Activated CD4-positive, alpha-beta T cell treated with anti-CD3 and anti-CD28 coated beads, Interleukin-2, amount 10 ng/mL, durations not matched to agents 24 days and 14 days (primary cell): ENCODE measurements at regions of chr4 and their contacts with region 1.

Region 1: DNA sequence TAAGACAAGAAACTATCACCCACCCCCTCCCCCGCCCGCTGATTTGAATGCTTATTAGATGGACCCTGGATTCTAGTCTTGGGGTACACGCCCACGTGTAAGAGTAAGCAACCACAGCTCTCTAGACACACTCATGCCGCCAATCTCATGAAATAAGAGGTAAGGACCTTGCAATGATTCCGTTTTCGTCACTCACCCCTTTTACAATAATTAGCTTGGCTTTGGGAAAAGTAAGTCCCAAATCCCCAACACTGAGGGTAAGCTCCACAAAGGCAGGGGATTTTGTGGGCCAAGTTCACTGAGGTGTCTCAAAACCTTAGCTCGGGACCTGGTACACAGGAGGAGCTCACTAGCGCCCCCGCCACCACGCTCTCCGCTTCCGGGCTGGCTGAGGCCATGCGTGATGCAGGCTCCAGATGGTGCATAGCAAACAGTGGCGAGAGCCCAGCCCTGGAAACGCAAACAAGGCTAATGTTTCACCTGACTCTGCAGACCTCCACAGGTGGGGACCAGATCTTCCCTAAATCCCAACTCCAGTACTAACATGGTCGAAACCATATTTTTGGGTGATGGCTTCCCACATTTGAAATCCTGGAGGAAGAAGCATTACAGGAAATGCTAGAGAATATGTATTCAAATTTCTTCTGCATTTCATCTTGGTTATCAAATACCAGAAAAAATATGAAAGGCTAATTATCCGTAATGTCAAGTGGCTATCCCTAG is 4.1 kb downstream of the PLAC8 start:
- DNase-seq: peak; percentile 97
- H3K4me3 Mint-ChIP-seq: peak overlapping the region; percentile 89
- H3K27ac Mint-ChIP-seq: peak overlapping the region; percentile 95
- H3K4me1 Mint-ChIP-seq: peaks cover 53% of the 10 kb centered on the region
- H3K27me3 Mint-ChIP-seq: no peaks in the 10 kb centered on the region

Region 2: DNA sequence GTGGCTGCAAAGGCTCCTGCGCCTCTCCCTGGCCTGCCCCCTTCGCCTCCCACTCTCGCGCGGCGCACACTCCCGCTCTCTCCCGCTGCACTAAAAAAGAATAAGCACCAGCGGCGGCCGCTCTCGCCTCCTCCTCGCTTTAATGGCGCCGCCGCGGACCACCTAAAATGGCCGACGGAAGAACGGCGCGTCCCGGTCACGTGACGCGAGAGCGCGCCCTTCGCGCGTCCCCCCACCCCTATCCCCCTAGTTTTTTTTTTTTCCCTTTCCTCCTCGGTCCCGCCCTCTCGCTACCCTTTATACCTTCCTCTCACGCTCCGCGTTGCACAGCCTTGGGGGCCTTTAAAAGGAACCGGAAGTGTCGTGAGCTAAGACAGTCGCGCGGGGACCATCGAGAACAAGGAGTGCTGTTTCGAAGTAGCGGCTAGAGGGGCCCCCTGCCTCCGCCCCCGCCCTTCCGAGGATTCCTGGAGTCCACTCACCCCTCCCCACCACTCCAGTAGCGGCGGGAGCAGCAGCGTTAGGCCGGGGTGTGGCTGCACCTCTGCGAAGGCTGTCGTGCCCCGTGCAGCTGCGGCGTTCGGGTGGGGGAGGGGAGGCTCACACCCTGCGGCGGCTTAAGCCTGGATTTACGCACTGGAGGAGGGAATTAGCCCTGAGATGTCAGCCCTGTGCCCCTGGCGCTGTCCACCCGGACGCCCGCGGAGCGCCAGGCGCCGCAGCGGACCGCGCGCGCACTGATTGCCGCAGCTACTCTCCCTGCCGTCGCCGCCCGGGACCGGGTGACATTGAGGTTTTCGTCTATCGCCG is 736.4 kb before region 1 on chr4 and contains the start of gene HNRNPD:
- intact Hi-C with region 1: loop called (anchors 5 kb)
- DNase-seq: peak; percentile 97
- H3K4me3 Mint-ChIP-seq: peak within 1 kb of the TSS; percentile 91
- H3K27ac Mint-ChIP-seq: peak within 1 kb of the TSS; percentile 98
- H3K4me1 Mint-ChIP-seq: peaks cover 38% of the 10 kb centered on the region
- H3K27me3 Mint-ChIP-seq: no peaks in the 10 kb centered on the region
- total RNA-seq, gene HNRNPD: 481 and 492 TPM in 2 replicates

Region 3: GRCh38 chr4:83012687-83013419 is 97.5 kb before region 1 on chr4:
- intact Hi-C with region 1: loop called (anchors 2 kb)
- DNase-seq: peak; percentile 99
- H3K4me3 Mint-ChIP-seq: peak overlapping the region; percentile 92
- H3K27ac Mint-ChIP-seq: peak overlapping the region; percentile 89
- H3K4me1 Mint-ChIP-seq: peaks cover 40% of the 10 kb centered on the region
- H3K27me3 Mint-ChIP-seq: peaks cover 1% of the 10 kb centered on the region

Region 4: GRCh38 chr4:83083925-83084475 is 26.4 kb before region 1 on chr4:
- intact Hi-C with region 1: loop called (anchors 2 kb)
- DNase-seq: peak; percentile 88
- H3K4me3 Mint-ChIP-seq: peak overlapping the region; percentile 42
- H3K27ac Mint-ChIP-seq: peak overlapping the region; percentile 9
- H3K4me1 Mint-ChIP-seq: peaks cover 28% of the 10 kb centered on the region
- H3K27me3 Mint-ChIP-seq: no peaks in the 10 kb centered on the region

Region 5: GRCh38 chr4:83237591-83237990 is 127.2 kb after region 1 on chr4:
- intact Hi-C with region 1: loop called (anchors 1 kb)
- DNase-seq: no peak
- H3K4me3 Mint-ChIP-seq: no peak overlapping the region
- H3K27ac Mint-ChIP-seq: no peak overlapping the region
- H3K4me1 Mint-ChIP-seq: peaks cover 51% of the 10 kb centered on the region
- H3K27me3 Mint-ChIP-seq: peaks cover 33% of the 10 kb centered on the region

Region 6: DNA sequence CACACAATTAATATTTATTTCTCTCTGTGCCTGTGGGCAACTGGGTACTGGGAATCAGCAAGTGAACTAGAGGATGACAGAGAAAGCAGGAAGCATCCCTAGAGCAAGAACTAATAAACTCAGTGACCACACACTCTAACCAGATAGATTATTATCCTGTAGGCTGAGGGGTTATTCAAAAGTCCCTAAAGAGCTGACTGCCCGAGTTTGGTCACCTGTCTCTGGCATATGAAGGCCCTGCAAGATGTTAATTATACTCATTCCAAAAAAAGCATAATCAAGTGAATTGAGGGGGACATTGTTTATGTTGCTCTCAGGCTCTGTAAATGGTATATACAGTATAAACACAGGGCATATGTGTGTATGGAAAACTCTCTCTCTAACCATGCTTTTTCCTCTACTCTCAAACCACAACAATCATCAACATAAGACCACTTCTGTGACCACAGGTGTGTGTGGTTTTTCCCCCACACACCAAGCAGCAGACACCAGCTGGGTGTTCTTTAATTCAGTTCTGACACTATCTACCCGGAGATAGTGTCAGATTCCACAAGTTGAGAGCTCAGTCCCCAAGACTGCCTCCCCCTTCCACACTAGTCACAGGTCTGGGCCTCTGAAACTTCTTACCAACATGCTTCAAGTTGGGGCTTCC is 230.4 kb after region 1 on chr4:
- intact Hi-C with region 1: loop called (anchors 5 kb)
- DNase-seq: peak; percentile 87
- H3K4me3 Mint-ChIP-seq: peak overlapping the region; percentile 50
- H3K27ac Mint-ChIP-seq: peak overlapping the region; percentile 93
- H3K4me1 Mint-ChIP-seq: peaks cover 25% of the 10 kb centered on the region
- H3K27me3 Mint-ChIP-seq: peaks cover 26% of the 10 kb centered on the region